ENCODE measurements at regions of chr14 and their contacts with region 1.

Region 1: GRCh38 chr14:64671591-64671990 is 32.6 kb upstream of the PLEKHG3 start:
- DNase-seq: no peak
- ATAC-seq: peak; percentile 84
- H3K4me3 ChIP-seq: no peak overlapping the region
- H3K27ac ChIP-seq: no peak overlapping the region
- H3K4me1 ChIP-seq: no peaks in the 10 kb centered on the region
- H3K27me3 ChIP-seq: no peaks in the 10 kb centered on the region

Region 2: DNA sequence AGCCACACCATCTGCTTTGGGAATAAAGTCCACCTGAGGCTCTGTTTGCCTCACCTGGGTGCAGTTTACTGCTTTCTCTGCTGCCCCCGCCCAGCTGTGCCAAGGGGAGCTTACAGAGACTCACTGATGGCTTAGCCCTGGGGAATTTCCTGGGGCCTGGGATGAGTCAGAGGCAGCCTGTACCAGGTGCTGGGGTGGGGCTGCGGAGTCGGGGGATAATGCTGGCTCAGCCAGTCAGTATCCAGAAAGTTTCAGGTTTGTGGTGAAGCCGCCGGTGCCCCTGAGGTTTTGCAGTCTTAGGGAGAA is 54.9 kb after region 1 on chr14:
- intact Hi-C with region 1: loop called in 1 of 2 experiments (anchors 10 kb)
- DNase-seq: peak in 1 of 2 donors; percentile 73
- ATAC-seq: no peak
- H3K4me3 ChIP-seq: no peak overlapping the region
- H3K27ac ChIP-seq: no peak overlapping the region
- H3K4me1 ChIP-seq: no peaks in the 10 kb centered on the region
- H3K27me3 ChIP-seq: no peaks in the 10 kb centered on the region

Region 3: DNA sequence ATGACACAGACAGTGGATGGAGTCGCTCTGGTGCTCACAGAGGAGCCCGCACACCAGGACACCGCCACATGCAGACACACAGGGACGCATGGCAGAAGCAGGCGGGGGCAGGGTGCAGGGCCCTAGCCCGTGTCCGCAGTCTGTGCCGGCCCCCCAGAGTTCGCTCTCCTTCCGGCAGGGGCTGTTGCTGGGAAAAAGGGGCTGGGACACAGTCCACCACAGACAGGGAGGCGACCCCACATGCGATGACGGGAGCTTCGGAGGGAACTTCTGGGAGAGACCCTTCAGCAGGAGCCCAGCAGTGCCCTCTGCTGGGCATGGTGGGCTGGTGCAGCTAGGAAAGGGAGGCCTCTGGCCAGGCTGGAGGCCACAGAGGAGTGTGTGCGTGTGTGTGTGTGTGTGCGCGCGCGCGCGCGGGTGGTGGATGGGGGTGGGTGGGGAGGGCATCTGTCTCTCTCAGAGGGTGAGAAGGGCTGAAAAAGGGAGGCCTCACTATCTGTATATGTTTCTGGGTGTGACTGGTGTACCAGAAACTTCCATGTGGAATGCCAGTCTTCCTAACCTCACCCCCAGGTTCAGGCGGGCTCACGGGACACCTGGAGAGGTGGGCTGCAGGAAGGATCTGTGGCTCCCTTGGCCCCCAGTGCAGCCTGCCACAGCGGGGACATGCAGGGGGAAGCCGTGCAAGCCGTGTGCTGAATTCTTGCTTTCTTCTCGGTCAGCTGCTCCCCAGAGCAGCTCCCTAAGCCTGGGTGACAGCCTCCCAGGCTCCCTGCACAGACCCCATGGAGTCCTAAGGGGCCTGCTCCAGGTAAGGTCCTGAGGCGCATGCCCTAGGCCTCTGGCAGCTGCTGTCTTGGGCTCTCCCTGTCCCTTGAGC is 93.3 kb after region 1 on chr14:
- intact Hi-C with region 1: loop called (anchors 1 to 2 kb)
- DNase-seq: peak; percentile 83 to 91
- ATAC-seq: peak; percentile 90
- H3K4me3 ChIP-seq: no peak overlapping the region
- H3K27ac ChIP-seq: no peak overlapping the region
- H3K4me1 ChIP-seq: no peaks in the 10 kb centered on the region
- H3K27me3 ChIP-seq: no peaks in the 10 kb centered on the region

Region 4: DNA sequence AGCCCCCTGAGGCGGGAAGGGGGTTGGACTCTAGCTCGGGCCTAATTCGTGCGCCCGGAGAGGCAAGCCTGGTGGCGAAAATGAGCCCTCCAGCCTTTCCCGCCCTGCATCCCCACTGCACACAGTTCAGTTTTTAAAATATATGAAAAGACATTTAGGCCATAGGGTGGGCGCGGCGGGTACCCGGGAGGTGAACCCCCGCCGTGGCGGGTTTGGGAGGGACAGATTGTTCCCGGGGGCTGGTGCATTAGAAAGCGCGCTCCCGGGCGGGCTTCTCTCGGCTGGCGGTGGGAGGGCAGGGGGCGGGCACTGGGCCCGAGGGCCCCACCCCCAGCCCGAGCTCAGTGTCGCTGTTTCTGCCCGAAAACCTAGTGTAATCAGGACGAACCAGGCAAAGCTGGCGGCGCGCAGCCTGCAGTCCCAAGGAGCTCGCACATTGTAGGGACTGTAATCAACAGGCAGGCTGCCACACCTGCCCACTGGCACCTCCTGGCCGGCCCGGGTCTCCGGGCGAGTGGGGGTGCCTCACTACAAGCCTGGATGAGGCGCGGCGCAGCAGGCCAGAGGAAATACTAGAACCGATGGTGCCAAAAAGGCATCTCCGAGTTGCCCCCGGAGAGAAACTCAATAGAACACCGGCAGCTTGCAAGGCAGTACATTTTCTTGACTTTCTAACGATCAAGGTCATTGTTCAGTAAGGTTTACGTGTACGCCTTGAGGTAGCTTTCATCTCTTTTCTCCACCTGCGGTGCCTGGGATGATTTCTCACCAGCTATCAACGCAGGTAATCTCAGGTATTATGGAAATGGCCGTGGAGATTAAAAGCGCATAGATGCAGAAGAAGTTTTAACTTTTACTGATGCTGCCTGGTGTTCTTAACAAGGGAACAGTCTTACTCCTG is 208.9 kb after region 1 on chr14:
- intact Hi-C with region 1: loop called (anchors 10 kb)
- DNase-seq: peak; percentile 64 to 80
- ATAC-seq: peak; percentile 79
- H3K4me3 ChIP-seq: peak overlapping the region; percentile 63 to 94
- H3K27ac ChIP-seq: no peak overlapping the region
- H3K4me1 ChIP-seq: no peaks in the 10 kb centered on the region
- H3K27me3 ChIP-seq: peaks cover 0 to 1% of the 10 kb centered on the region in 2 donors

Measured in aorta (tissue), 5 donors.